OCI-LY7 (cell line): ENCODE measurements at regions of chr6 and their contacts with region 1.

Region 1: DNA sequence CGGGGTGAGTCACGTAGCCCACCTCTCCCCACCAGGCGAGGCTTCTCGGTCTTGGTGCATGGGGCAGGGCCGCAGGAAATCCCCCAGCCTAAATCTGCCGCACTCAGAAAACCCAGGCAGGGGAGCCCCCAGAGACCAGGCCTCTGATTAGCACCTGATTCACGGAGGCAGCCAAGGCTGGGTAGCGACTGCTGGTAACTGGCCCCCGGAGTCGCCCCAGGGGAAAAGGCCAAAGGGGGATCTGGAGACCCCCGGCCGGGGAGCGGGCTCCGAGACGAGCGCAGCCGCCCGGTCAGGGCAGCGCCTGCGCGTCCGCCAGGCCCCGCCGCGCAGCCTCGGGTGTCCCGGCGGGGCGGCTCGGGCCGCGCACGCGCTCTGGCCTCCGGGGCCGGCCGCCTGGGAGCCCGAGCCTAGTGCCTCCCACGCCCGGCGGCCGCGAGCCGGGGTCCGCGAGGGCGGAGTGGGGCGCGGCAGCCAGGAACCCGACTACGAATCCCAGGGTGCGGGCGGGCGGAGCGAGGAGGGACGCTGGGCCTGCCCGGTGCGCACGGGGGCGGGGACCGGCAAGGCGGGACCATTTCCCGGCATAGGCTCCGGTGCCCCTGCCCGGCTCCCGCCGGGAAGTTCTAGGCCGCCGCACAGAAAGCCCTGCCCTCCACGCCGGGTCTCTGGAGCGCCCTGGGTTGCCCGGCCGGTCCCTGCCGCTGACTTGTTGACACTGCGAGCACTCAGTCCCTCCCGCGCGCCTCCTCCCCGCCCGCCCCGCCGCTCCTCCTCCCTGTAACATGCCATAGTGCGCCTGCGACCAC is at the start of gene DUSP22:
- DNase-seq: peak; percentile 87
- H3K4me3 ChIP-seq: peak within 1 kb of the TSS; percentile 80
- H3K27ac ChIP-seq: peak within 1 kb of the TSS; percentile 88
- H3K4me1 ChIP-seq: peaks cover 65% of the 10 kb centered on the region
- CTCF ChIP-seq: no peak
- total RNA-seq, gene DUSP22: 133 and 149 TPM in 2 replicates

Region 2: GRCh38 chr6:259901-260508 is 31.9 kb before region 1 on chr6:
- CTCF ChIA-PET with region 1: no interaction called
- POLR2A ChIA-PET with region 1: interaction called, 5 read pairs
- intact Hi-C with region 1: loop called (anchors 2 kb)
- DNase-seq: no peak
- H3K4me3 ChIP-seq: peak overlapping the region; percentile 20
- H3K27ac ChIP-seq: no peak overlapping the region
- H3K4me1 ChIP-seq: peaks cover 35% of the 10 kb centered on the region
- CTCF ChIP-seq: no peak

Region 3: GRCh38 chr6:313087-313486 is 21.2 kb after region 1 on chr6:
- CTCF ChIA-PET with region 1: interaction called, 4 read pairs
- POLR2A ChIA-PET with region 1: interaction called, 98 read pairs
- intact Hi-C with region 1: no loop called
- DNase-seq: peak; percentile 63
- H3K4me3 ChIP-seq: peak overlapping the region; percentile 28
- H3K27ac ChIP-seq: peak overlapping the region; percentile 57
- H3K4me1 ChIP-seq: peaks cover 89% of the 10 kb centered on the region
- CTCF ChIP-seq: no peak

Region 4: DNA sequence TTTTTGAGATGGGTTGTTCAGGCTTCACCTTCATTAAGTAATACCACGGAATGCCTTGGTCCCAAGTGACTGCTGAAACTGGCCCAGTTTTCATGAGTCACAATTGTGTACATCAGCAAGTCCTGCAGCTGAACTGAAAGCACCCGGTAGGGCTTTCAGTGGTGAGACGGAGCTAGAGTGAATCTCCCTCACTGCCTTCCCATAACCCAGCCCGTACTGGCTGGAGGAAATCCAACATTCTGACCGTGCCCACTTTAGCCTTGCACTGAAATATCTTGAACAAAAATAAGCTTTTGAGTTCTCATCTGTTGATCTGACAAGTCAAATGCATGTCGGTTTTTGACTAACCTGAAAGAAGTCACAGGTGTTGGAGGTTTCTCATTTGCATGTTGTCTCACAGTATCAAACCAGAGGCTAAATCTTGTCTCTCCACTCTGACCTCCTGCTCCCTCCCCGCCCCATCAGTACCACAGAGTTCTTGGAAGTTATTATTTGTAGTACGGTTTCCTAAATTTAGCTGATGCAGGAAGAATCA is 36.3 kb after region 1 on chr6:
- CTCF ChIA-PET with region 1: interaction called, 6 read pairs
- POLR2A ChIA-PET with region 1: interaction called, 28 read pairs
- intact Hi-C with region 1: loop called (anchors 1 kb)
- DNase-seq: peak; percentile 90
- H3K4me3 ChIP-seq: peak overlapping the region; percentile 58
- H3K27ac ChIP-seq: peak overlapping the region; percentile 98
- H3K4me1 ChIP-seq: peaks cover 98% of the 10 kb centered on the region
- CTCF ChIP-seq: no peak

Region 5: GRCh38 chr6:364609-365540 is 73.0 kb after region 1 on chr6:
- CTCF ChIA-PET with region 1: no interaction called
- POLR2A ChIA-PET with region 1: interaction called, 17 read pairs
- intact Hi-C with region 1: loop called (anchors 1 kb)
- DNase-seq: peak; percentile 97
- H3K4me3 ChIP-seq: peak overlapping the region; percentile 45
- H3K27ac ChIP-seq: peak overlapping the region; percentile 95
- H3K4me1 ChIP-seq: peaks cover 84% of the 10 kb centered on the region
- CTCF ChIP-seq: no peak

Region 6: GRCh38 chr6:408599-409102 is 116.8 kb after region 1 on chr6:
- CTCF ChIA-PET with region 1: no interaction called
- POLR2A ChIA-PET with region 1: no interaction called
- intact Hi-C with region 1: no loop called
- DNase-seq: peak; percentile 30
- H3K4me3 ChIP-seq: no peak overlapping the region
- H3K27ac ChIP-seq: no peak overlapping the region
- H3K4me1 ChIP-seq: peaks cover 17% of the 10 kb centered on the region
- CTCF ChIP-seq: peak; percentile 82